ENCODE measurements at regions of chr11 and their contacts with region 1.

Region 1: DNA sequence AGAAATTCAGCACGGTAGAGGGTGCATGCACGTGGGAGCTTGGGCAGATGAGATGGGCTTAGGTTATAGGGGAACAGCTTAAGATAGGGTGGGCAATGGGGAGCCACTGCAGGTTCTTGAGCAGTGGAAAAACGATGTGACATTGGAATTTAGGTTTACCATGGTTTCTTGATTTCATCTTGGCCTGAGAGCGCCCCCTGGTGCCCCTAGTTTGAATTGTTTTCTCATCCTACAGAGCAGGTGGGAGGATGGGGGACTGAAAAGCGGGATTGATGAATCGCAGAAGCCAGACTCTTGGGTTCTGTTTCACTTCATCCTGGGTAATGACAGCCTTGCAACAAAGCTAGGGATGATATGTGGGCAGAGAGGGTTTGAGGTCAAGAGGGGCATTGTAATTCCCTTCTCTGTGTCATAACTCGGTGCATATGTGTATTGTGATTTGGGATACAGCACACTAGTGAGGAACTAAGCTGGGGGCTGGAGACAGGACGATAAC is 6.7 kb upstream of the MCAM start:
- DNase-seq: peak; percentile 78
- ATAC-seq: peak; percentile 24

Region 2: DNA sequence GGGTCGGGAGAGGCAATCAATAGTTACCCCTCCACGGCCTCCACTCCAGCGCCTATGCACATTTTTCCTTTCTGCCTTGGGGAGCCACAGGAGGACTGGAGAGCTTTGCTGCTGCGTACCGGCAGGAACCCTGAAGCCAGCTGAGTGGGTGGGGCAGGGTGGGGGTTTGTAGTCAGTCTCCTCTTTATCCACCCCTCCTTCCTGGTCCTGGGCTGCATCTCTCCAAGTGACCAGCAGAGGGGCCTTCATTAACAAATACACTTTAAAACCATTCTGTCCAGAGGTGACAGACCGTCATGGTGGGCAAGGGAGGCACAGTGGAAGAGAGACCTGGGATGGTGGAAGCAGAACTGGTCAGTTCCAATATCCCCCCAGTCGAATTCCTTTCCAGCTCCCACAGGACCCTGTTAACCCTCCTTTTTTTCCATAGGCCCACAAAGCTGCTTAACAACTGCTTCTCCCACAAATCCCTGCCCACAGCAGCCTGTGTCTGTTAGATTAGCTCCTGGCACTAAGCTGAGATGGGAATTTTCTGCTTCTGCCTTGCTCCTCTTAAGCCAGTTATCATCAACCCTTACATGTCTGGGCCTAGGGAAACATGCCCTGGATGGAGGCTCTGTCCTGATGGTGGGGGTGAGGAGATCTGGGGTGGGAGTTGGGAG is 178.6 kb before region 1 on chr11:
- intact Hi-C with region 1: loop called (anchors 10 kb)
- DNase-seq: peak; percentile 66
- ATAC-seq: peak; percentile 87

Region 3: DNA sequence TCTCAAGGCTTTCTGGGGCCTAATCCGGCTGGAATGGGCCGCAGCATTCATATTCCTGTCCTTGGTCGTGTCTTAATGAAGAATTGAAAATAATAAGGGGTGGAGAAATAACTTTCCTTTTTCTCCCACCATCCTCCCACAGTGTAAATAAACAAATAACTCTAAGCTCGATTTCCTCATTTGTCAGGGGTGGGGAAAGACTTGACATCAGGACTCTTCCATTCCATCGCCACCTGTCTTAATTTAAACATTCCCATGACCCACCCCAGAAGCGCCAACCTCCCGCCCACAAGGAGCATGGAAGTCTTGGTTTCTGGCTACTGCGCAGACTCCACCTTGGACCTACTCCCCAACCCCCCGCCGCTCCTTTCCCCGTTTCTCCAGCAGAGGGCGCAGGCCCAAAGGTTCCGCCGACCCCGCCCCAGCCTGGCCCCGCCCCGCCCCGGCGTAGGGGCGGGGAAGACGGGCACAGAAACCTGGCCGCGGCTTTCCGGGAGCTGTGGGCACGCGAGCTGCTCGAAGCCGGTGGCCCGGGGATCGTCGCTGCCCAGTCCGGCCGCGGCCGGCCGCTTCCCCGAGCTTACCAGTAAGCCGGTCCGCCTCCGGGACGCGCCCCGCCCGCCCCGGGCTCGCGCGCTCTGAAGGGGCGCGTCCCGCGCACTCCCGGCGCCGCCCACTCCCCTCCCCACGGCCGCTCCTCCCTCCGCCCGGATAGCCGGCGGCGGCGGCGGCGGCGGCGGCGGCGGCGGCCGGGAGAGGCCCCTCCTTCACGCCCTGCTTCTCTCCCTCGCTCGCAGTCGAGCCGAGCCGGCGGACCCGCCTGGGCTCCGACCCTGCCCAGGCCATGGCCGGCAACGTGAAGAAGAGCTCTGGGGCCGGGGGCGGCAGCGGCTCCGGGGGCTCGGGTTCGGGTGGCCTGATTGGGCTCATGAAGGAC is 117.7 kb before region 1 on chr11 and contains the start of gene CBL:
- intact Hi-C with region 1: loop called (anchors 5 kb)
- DNase-seq: peak; percentile 97
- ATAC-seq: peak; percentile 99
- total RNA-seq, gene CBL: 6.5 TPM

Measured in Right ventricle myocardium superior (tissue), 1 donor.